Common myeloid progenitor, CD34-positive (primary cell): ENCODE measurements at regions of chr4 and their contacts with region 1.

Region 1: DNA sequence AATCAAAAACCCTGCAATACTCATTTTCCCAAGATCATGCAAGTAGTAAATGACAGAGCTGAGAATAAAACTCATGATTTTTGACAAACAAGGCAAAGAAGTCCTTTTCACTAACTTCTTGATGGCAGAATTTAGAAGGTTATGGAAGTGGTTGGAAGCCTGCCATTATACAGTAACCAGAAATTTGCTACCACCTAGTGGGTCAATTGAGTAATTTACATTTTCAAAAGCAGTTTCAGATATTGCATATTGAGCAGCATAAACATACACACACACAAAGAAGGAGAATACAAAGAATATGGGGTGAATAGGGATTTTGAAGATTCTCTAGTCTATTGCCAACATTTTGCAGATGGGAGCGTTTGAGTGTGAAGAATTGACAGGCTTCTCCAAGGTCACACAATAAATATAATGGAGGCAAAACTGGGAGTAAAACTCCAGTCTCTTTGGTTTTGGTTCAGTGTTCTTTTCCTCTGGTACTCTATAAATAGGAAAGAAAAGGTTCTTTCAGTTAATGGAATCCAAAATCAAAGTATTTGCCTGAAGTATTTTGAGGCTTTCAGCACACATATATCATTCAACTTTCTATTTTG is 70.2 kb downstream of the GC start:
- DNase-seq: peak; percentile 48 to 77 (median 67)
- H3K4me3 ChIP-seq: no peak overlapping the region
- H3K27ac ChIP-seq: no peak overlapping the region
- H3K4me1 ChIP-seq: no peaks in the 10 kb centered on the region
- H3K27me3 ChIP-seq: peaks cover 0 to 5% (median 4%) of the 10 kb centered on the region in 5 experiments

Region 2: GRCh38 chr4:71696992-71697391 is 16.7 kb before region 1 on chr4:
- CTCF ChIA-PET with region 1: interaction called, 18 read pairs
- POLR2A ChIA-PET with region 1: no interaction called
- DNase-seq: no peak
- H3K4me3 ChIP-seq: no peak overlapping the region
- H3K27ac ChIP-seq: no peak overlapping the region
- H3K4me1 ChIP-seq: no peaks in the 10 kb centered on the region
- H3K27me3 ChIP-seq: peaks cover 0 to 50% (median 14%) of the 10 kb centered on the region in 5 experiments